ENCODE measurements at regions of chr6 and their contacts with region 1.

Region 1: GRCh38 chr6:155418017-155418761 is 37.5 kb downstream of the NOX3 start:
- DNase-seq: peak; percentile 30 to 76
- H3K4me3 ChIP-seq: peak overlapping the region; percentile 17 to 33
- H3K27ac ChIP-seq: peak overlapping the region; percentile 30 to 61
- H3K4me1 ChIP-seq: no peaks in the 10 kb centered on the region
- H3K27me3 ChIP-seq: no peaks in the 10 kb centered on the region
- CTCF ChIP-seq: no peak

Region 2: DNA sequence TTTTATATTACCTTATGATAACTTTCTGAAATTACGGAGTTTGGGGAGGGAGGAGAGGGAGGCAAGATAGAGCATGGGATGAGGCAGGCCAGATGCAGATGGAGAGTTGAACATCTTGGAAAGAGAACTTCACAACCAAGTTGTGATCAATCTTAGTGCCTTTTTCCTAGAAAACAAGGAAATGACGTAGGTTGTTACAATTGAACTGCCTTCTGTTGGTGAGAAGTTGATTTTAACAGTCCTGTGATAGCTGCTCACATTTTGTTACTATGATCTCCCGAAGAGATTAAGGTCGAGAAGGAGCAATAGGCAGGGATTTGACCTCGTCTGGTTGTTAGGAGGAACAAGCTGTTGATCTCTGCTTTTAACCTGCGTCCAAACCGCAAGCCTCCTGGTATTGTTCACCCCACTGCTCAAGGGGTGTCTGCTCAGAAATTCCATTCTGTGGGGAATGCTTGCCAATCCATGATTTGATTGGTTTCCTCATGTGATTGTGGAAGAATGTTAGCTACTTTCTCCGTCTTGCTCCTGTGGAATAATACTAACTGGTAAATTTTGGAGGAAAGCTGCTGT is 388.0 kb before region 1 on chr6:
- intact Hi-C with region 1: no loop called
- DNase-seq: peak in 1 of 2 donors; percentile 31
- H3K4me3 ChIP-seq: no peak overlapping the region
- H3K27ac ChIP-seq: no peak overlapping the region
- H3K4me1 ChIP-seq: peaks cover 0 to 17% of the 10 kb centered on the region in 2 donors
- H3K27me3 ChIP-seq: no peaks in the 10 kb centered on the region
- CTCF ChIP-seq: no peak

Region 3: DNA sequence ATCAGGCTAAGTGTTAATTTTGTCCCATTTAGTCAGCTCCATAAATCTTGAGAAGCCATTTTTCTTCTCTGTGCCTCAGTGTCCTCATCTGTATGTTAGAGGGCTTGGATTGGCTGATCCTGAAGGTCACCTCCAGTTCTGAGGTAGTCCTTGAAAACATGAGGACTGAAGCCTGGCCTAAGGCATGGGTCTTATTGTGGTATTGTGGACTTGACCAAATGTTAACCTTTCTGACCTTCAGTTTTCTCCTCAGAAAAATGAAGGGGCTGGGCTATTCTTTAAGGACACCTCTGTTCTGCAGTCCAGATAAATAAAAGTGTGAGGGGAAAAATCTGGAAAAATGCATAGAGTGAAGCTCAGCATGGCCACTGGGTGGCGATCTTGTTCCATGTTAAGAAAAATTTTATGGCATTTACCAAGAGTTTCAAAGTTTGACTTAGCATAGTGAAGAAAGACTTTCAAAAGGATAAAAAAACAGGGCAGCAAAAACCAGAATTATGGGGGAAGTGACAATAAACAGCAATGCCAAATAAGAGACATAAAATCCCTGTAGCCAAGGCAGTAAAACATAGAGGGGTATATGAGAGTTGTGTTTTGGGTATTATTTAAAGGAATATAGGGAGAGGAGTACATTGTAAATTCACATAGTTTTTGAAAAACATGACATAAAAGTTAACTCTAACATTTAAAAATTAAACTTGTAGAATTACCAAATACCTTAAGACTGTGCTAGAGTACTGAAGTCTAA is 90.7 kb before region 1 on chr6:
- intact Hi-C with region 1: loop called (anchors 5 kb)
- DNase-seq: peak in 1 of 2 donors; percentile 70
- H3K4me3 ChIP-seq: no peak overlapping the region
- H3K27ac ChIP-seq: no peak overlapping the region
- H3K4me1 ChIP-seq: no peaks in the 10 kb centered on the region
- H3K27me3 ChIP-seq: no peaks in the 10 kb centered on the region
- CTCF ChIP-seq: peak; percentile 68 to 87 (median 77)

Region 4: GRCh38 chr6:155483858-155484257 is 65.7 kb after region 1 on chr6:
- intact Hi-C with region 1: no loop called
- DNase-seq: no peak
- H3K4me3 ChIP-seq: no peak overlapping the region
- H3K27ac ChIP-seq: no peak overlapping the region
- H3K4me1 ChIP-seq: no peaks in the 10 kb centered on the region
- H3K27me3 ChIP-seq: no peaks in the 10 kb centered on the region
- CTCF ChIP-seq: no peak

Measured in ascending aorta (tissue), 2 donors.